GM10248 (cell line): ENCODE measurements at regions of chr11 and their contacts with region 1.

Region 1: GRCh38 chr11:67027483-67028196 is 4.7 kb downstream of the SYT12 start:
- DNase-seq: peak; percentile 53
- CTCF ChIP-seq: no peak

Region 2: GRCh38 chr11:67053896-67054842 is 26.5 kb after region 1 on chr11:
- CTCF ChIA-PET with region 1: interaction called, 25 read pairs
- POLR2A ChIA-PET with region 1: interaction called, 3 read pairs
- DNase-seq: peak; percentile 84
- CTCF ChIP-seq: peak; percentile 89